ENCODE measurements at regions of chr4 and their contacts with region 1.

Region 1: GRCh38 chr4:40363382-40363920 is 28.3 kb downstream of the CHRNA9 start:
- DNase-seq: peak; percentile 85 to 89
- H3K4me3 ChIP-seq: no peak overlapping the region
- H3K4me3 Mint-ChIP-seq: peak overlapping the region; percentile 52
- H3K27ac Mint-ChIP-seq: peak overlapping the region; percentile 89
- H3K4me1 ChIP-seq: peaks cover 35% of the 10 kb centered on the region
- H3K4me1 Mint-ChIP-seq: peaks cover 47% of the 10 kb centered on the region
- H3K27me3 ChIP-seq: no peaks in the 10 kb centered on the region
- H3K27me3 Mint-ChIP-seq: no peaks in the 10 kb centered on the region
- CTCF ChIP-seq: no peak

Region 2: GRCh38 chr4:40216622-40217366 is 146.7 kb before region 1 on chr4:
- CTCF ChIA-PET with region 1: no interaction called
- POLR2A ChIA-PET with region 1: no interaction called
- intact Hi-C with region 1: no loop called
- DNase-seq: no peak
- H3K4me3 ChIP-seq: no peak overlapping the region
- H3K4me3 Mint-ChIP-seq: no peak overlapping the region
- H3K27ac Mint-ChIP-seq: no peak overlapping the region
- H3K4me1 ChIP-seq: peaks cover 7% of the 10 kb centered on the region
- H3K4me1 Mint-ChIP-seq: peaks cover 14% of the 10 kb centered on the region
- H3K27me3 ChIP-seq: no peaks in the 10 kb centered on the region
- H3K27me3 Mint-ChIP-seq: no peaks in the 10 kb centered on the region
- CTCF ChIP-seq: no peak

Region 3: GRCh38 chr4:40418430-40419230 is 55.2 kb after region 1 on chr4:
- CTCF ChIA-PET with region 1: no interaction called
- POLR2A ChIA-PET with region 1: no interaction called
- intact Hi-C with region 1: loop called (anchors 5 kb)
- DNase-seq: peak; percentile 51 to 65
- H3K4me3 ChIP-seq: no peak overlapping the region
- H3K4me3 Mint-ChIP-seq: peak overlapping the region; percentile 40
- H3K27ac Mint-ChIP-seq: peak overlapping the region; percentile 90
- H3K4me1 ChIP-seq: peaks cover 36% of the 10 kb centered on the region
- H3K4me1 Mint-ChIP-seq: peaks cover 34% of the 10 kb centered on the region
- H3K27me3 ChIP-seq: no peaks in the 10 kb centered on the region
- H3K27me3 Mint-ChIP-seq: no peaks in the 10 kb centered on the region
- CTCF ChIP-seq: no peak

Region 4: GRCh38 chr4:40672536-40673526 is 309.4 kb after region 1 on chr4:
- CTCF ChIA-PET with region 1: no interaction called
- POLR2A ChIA-PET with region 1: no interaction called
- intact Hi-C with region 1: no loop called
- DNase-seq: peak; percentile 37 to 46
- H3K4me3 ChIP-seq: no peak overlapping the region
- H3K4me3 Mint-ChIP-seq: peak overlapping the region; percentile 52
- H3K27ac Mint-ChIP-seq: peak overlapping the region; percentile 84
- H3K4me1 ChIP-seq: peaks cover 38% of the 10 kb centered on the region
- H3K4me1 Mint-ChIP-seq: peaks cover 34% of the 10 kb centered on the region
- H3K27me3 ChIP-seq: no peaks in the 10 kb centered on the region
- H3K27me3 Mint-ChIP-seq: no peaks in the 10 kb centered on the region
- CTCF ChIP-seq: no peak

Measured in Caco-2 (cell line).